HEK293 (cell line): ENCODE measurements at regions of chr21 and their contacts with region 1.

Region 1: DNA sequence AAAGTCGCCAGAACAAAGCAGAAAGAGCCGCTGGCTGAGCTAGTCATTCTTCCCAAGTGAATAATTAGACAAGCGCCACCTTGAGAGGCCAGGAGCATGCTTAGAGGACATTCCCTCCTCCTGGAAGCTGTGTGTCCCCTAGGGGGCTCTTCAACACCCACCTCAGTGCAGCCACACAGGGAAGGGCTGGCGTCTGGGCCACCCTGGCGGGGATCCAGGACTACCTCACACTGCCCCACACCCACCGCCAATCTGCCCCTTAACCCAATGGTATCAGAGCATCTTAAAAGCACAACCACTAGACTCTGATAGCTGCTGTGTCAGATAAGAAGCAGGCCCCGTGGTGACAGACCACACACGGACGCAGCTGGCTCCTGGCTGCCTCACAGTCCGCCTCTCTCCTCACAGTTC is 24.9 kb downstream of the SETD4 start:
- H3K4me3 ChIP-seq: no peak overlapping the region
- H3K27ac ChIP-seq: no peak overlapping the region
- H3K4me1 ChIP-seq: no peaks in the 10 kb centered on the region
- CTCF ChIP-seq: no peak

Region 2: GRCh38 chr21:35861661-35862060 is 173.7 kb before region 1 on chr21:
- CTCF ChIA-PET with region 1: no interaction called
- POLR2A ChIA-PET with region 1: no interaction called
- H3K4me3 ChIP-seq: no peak overlapping the region
- H3K27ac ChIP-seq: no peak overlapping the region
- H3K4me1 ChIP-seq: no peaks in the 10 kb centered on the region
- CTCF ChIP-seq: no peak

Region 3: DNA sequence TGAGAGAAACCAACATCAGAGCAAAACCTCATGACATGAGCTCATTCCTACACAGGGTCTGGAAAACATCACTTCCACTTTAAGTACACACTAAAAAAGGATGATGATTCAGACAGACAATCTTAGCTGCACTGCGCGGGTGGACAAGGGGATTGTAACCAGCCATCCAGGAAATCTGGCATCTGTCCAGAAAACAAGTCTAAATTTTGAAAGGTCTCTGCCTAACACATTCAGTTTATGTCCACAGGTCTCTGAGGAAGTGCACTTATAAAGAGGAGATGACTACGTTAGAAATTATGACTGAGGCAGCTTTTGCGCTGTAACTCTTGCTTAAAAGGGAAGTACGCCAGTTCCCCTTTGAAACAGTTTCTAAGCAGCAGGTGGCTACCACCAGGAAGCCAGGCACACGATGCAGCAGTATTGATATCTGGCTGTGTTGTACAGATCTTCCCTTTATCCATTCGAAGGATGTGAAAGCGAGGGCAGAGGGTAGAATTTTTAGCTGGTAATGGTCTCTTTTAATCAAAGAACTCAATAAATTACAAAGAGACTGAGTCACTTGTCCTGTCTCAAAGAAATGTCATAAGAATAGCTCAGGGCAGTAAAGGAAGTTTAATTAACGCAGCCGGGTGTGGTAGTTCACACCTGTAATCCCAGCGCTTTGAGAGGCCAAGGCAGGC is 103.0 kb before region 1 on chr21:
- CTCF ChIA-PET with region 1: no interaction called
- POLR2A ChIA-PET with region 1: no interaction called
- H3K4me3 ChIP-seq: peak overlapping the region; percentile 2; the same call in 1 of the 2 replicates
- H3K27ac ChIP-seq: no peak overlapping the region; the same call in 1 of the 2 replicates
- H3K4me1 ChIP-seq: peaks cover 4% of the 10 kb centered on the region
- CTCF ChIP-seq: no peak

Region 4: DNA sequence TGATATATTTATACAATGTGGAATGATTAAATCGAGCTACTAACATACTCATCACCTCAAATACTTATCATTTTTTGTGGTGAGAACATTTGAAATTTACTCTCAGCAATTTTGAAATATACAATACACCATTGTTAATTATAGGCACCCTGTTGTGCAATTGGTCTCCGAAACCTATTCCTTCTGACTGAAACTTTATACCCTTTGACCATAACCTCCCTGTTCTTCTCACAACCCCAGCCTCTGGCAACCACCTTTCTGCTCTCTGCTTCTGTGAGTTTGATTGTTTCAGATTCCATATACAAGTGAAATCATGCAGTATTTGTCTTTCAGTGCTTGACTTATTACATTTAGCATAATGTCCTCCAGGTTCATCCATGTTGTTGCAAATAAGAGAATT is 24.6 kb before region 1 on chr21:
- CTCF ChIA-PET with region 1: no interaction called
- POLR2A ChIA-PET with region 1: no interaction called
- H3K4me3 ChIP-seq: no peak overlapping the region
- H3K27ac ChIP-seq: no peak overlapping the region
- H3K4me1 ChIP-seq: no peaks in the 10 kb centered on the region
- CTCF ChIP-seq: no peak

Region 5: DNA sequence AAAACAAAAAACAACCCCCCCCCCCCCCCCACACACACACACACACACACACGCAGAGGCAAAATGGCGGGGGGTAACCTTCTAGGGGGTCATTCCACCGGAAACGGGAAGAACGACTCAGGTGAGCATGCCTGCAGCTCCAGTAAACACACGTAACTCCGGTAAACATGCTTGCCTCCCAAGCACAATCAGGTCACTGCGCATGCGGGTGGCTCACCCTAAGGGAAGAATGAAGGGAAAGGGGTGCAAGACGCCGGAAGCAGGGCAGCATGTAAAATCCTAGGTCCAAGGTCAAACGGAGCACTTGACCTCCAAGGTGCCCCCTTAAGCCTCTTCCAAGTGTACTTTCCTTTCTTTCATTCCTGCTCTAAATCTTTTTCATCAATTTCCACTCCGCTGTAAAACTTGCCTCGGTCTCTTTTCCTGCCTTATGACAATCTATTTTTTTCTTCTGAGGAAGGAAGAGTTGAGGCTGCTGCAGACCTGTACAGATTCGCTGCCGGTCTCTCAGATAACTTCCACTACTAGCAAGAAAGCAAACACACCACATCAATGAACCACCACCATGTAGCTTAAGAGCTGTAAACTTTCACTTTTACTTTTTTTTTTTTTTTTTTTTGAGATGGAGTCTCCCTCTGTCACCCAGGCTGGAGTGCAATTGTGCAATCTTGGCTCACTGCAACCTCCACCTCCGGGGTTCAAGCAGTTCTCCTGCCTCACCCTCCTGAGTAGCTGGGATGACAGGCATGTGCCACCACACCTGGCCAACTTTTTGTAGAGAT is 78.5 kb after region 1 on chr21:
- CTCF ChIA-PET with region 1: interaction called, 20 read pairs
- POLR2A ChIA-PET with region 1: no interaction called
- H3K4me3 ChIP-seq: no peak overlapping the region
- H3K27ac ChIP-seq: no peak overlapping the region
- H3K4me1 ChIP-seq: no peaks in the 10 kb centered on the region
- CTCF ChIP-seq: no peak